Activated CD8-positive, alpha-beta T cell treated with anti-CD3 and anti-CD28 coated beads for 36 hours (primary cell): ENCODE measurements at regions of chr1 and their contacts with region 1.

Region 1: DNA sequence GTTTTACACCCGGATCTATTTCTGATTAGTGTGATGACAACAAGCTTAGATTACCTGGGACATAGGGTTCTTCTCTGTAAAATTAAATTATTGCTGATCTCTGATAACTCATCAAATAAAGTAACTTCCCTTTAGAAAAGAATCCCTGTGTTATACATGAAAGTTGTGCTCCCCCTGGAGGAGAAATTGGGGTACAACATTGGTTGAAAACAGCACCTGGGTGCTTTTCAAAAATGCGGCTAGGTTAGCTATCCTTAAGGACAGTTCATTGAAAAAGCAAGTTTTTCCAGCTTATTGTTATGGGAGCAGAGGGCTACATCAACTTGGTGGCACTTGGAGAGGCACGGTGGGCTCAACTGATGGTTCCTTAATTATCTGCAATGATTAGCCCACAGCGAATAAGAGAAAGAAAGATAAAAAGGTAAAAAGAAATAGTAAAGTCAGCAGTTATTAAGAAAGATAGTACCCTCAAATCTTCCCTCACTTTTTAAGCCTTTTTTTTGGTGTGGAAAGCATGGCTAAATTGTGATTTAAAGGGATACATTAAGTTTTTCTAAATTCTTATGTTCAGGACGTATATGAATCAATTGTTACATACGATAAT is 97.8 kb downstream of the FMN2 start:
- DNase-seq: peak; percentile 28
- ATAC-seq: no peak
- H3K4me3 Mint-ChIP-seq: no peak overlapping the region
- H3K27ac Mint-ChIP-seq: no peak overlapping the region
- H3K4me1 Mint-ChIP-seq: no peaks in the 10 kb centered on the region
- H3K27me3 Mint-ChIP-seq: peaks cover 13% of the 10 kb centered on the region
- CTCF ChIP-seq: peak; percentile 72

Region 2: GRCh38 chr1:239184561-239185244 is 1004.8 kb before region 1 on chr1:
- CTCF ChIA-PET with region 1: no interaction called
- POLR2A ChIA-PET with region 1: no interaction called
- intact Hi-C with region 1: no loop called
- DNase-seq: no peak
- ATAC-seq: no peak
- H3K4me3 Mint-ChIP-seq: no peak overlapping the region
- H3K27ac Mint-ChIP-seq: no peak overlapping the region
- H3K4me1 Mint-ChIP-seq: no peaks in the 10 kb centered on the region
- H3K27me3 Mint-ChIP-seq: no peaks in the 10 kb centered on the region
- CTCF ChIP-seq: no peak

Region 3: GRCh38 chr1:240027059-240027462 is 162.4 kb before region 1 on chr1:
- CTCF ChIA-PET with region 1: interaction called, 5 read pairs
- POLR2A ChIA-PET with region 1: no interaction called
- intact Hi-C with region 1: loop called (anchors 10 kb)
- DNase-seq: peak; percentile 44
- ATAC-seq: peak; percentile 53
- H3K4me3 Mint-ChIP-seq: no peak overlapping the region
- H3K27ac Mint-ChIP-seq: no peak overlapping the region
- H3K4me1 Mint-ChIP-seq: no peaks in the 10 kb centered on the region
- H3K27me3 Mint-ChIP-seq: no peaks in the 10 kb centered on the region
- CTCF ChIP-seq: peak; percentile 66

Region 4: GRCh38 chr1:240149484-240150094 is 39.9 kb before region 1 on chr1:
- CTCF ChIA-PET with region 1: interaction called, 11 read pairs
- POLR2A ChIA-PET with region 1: no interaction called
- intact Hi-C with region 1: no loop called
- DNase-seq: no peak
- ATAC-seq: no peak
- H3K4me3 Mint-ChIP-seq: no peak overlapping the region
- H3K27ac Mint-ChIP-seq: no peak overlapping the region
- H3K4me1 Mint-ChIP-seq: no peaks in the 10 kb centered on the region
- H3K27me3 Mint-ChIP-seq: peaks cover 2% of the 10 kb centered on the region
- CTCF ChIP-seq: peak; percentile 74

Region 5: GRCh38 chr1:240199758-240200645 is 10.5 kb after region 1 on chr1:
- CTCF ChIA-PET with region 1: interaction called, 12 read pairs
- POLR2A ChIA-PET with region 1: no interaction called
- intact Hi-C with region 1: no loop called
- DNase-seq: no peak
- ATAC-seq: no peak
- H3K4me3 Mint-ChIP-seq: no peak overlapping the region
- H3K27ac Mint-ChIP-seq: no peak overlapping the region
- H3K4me1 Mint-ChIP-seq: no peaks in the 10 kb centered on the region
- H3K27me3 Mint-ChIP-seq: no peaks in the 10 kb centered on the region
- CTCF ChIP-seq: no peak

Region 6: GRCh38 chr1:240285541-240285940 is 96.1 kb after region 1 on chr1:
- CTCF ChIA-PET with region 1: no interaction called
- POLR2A ChIA-PET with region 1: no interaction called
- intact Hi-C with region 1: no loop called
- DNase-seq: no peak
- ATAC-seq: no peak
- H3K4me3 Mint-ChIP-seq: no peak overlapping the region
- H3K27ac Mint-ChIP-seq: no peak overlapping the region
- H3K4me1 Mint-ChIP-seq: no peaks in the 10 kb centered on the region
- H3K27me3 Mint-ChIP-seq: no peaks in the 10 kb centered on the region
- CTCF ChIP-seq: no peak

Region 7: GRCh38 chr1:240312872-240313271 is 123.4 kb after region 1 on chr1:
- CTCF ChIA-PET with region 1: no interaction called
- POLR2A ChIA-PET with region 1: no interaction called
- intact Hi-C with region 1: no loop called
- DNase-seq: no peak
- ATAC-seq: no peak
- H3K4me3 Mint-ChIP-seq: no peak overlapping the region
- H3K27ac Mint-ChIP-seq: no peak overlapping the region
- H3K4me1 Mint-ChIP-seq: no peaks in the 10 kb centered on the region
- H3K27me3 Mint-ChIP-seq: no peaks in the 10 kb centered on the region
- CTCF ChIP-seq: no peak